A549 (cell line): ENCODE measurements at regions of chrX and their contacts with region 1.

Region 1: DNA sequence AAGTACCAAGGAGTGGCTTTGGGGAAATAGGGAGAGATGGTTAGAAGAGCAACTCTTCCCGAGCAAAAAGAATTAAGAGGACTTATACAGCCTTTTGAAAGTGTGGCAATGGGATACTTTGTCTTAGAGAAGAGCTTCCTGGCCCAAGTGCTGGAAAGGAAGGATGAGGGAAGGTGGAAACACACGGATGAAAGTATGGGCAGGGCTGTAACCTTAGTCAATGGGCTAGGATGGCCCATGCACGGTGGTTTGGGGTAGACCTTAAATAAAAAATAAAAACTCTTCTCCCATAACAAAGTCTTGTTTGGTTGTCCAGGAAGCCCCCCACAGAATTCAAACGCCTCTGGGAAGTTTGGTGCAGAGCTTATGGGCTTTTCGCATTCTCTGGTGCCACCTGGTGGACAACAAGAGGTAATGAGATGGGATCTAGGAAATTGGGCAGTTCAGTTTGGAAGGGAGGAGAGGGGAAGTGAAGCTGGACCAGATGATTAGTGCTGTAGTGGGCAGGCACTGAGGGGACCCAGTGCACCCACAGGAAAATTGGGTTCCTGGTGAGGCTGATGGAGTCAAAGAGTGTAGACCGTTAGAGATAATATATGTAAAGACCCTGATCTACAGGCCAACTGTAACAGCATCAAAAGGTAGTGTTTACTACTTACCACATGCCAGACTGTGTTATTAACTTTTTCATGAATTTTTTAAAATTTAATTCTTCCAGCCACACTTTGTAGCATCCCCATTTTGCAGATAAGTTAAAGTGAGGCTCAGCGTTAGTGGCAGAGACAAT is 13.8 kb upstream of the ENOX2 start:
- DNase-seq: peak; percentile 44 to 55
- ATAC-seq: peak; percentile 85 to 87
- H3K4me3 ChIP-seq: no peak overlapping the region
- H3K27ac ChIP-seq: no peak overlapping the region
- H3K4me1 ChIP-seq: no peaks in the 10 kb centered on the region
- CTCF ChIP-seq: peak; percentile 78
- EP300 ChIP-seq: no peak
- POLR2A ChIP-seq: no peak
- RAD21 ChIP-seq: peak; percentile 90

Region 2: GRCh38 chrX:130330706-130331105 is 586.1 kb before region 1 on chrX:
- CTCF ChIA-PET with region 1: interaction called, 13 read pairs
- POLR2A ChIA-PET with region 1: no interaction called
- DNase-seq: peak; percentile 53 to 75
- ATAC-seq: peak; percentile 94
- H3K4me3 ChIP-seq: no peak overlapping the region
- H3K27ac ChIP-seq: no peak overlapping the region
- H3K4me1 ChIP-seq: no peaks in the 10 kb centered on the region
- CTCF ChIP-seq: peak; percentile 70
- EP300 ChIP-seq: no peak
- POLR2A ChIP-seq: no peak
- RAD21 ChIP-seq: peak; percentile 66 to 74

Region 3: GRCh38 chrX:130393451-130394074 is 523.3 kb before region 1 on chrX:
- CTCF ChIA-PET with region 1: interaction called, 58 read pairs
- POLR2A ChIA-PET with region 1: no interaction called
- DNase-seq: peak; percentile 60 to 71
- ATAC-seq: peak; percentile 94 to 95
- H3K4me3 ChIP-seq: no peak overlapping the region
- H3K27ac ChIP-seq: no peak overlapping the region
- H3K4me1 ChIP-seq: no peaks in the 10 kb centered on the region
- CTCF ChIP-seq: peak; percentile 69
- EP300 ChIP-seq: no peak
- POLR2A ChIP-seq: no peak
- RAD21 ChIP-seq: peak; percentile 65 to 71

Region 4: GRCh38 chrX:130539721-130540321 is 377.0 kb before region 1 on chrX:
- CTCF ChIA-PET with region 1: interaction called, 62 read pairs
- POLR2A ChIA-PET with region 1: no interaction called
- DNase-seq: peak; percentile 25 to 53
- ATAC-seq: peak; percentile 66 to 87; a peak in 4 of 6 replicates
- H3K4me3 ChIP-seq: no peak overlapping the region
- H3K27ac ChIP-seq: no peak overlapping the region
- H3K4me1 ChIP-seq: no peaks in the 10 kb centered on the region
- CTCF ChIP-seq: peak; percentile 79
- EP300 ChIP-seq: no peak
- POLR2A ChIP-seq: no peak
- RAD21 ChIP-seq: peak; percentile 61 to 63

Region 5: GRCh38 chrX:130552444-130553073 is 364.3 kb before region 1 on chrX:
- CTCF ChIA-PET with region 1: interaction called, 13 read pairs
- POLR2A ChIA-PET with region 1: no interaction called
- DNase-seq: no peak
- ATAC-seq: no peak
- H3K4me3 ChIP-seq: no peak overlapping the region
- H3K27ac ChIP-seq: no peak overlapping the region
- H3K4me1 ChIP-seq: 0 out of 3 replicates have a peak, but pooled peaks cover 3% of the 10 kb centered on the region
- CTCF ChIP-seq: no peak
- EP300 ChIP-seq: no peak
- POLR2A ChIP-seq: no peak
- RAD21 ChIP-seq: no peak

Region 6: GRCh38 chrX:130575831-130576389 is 340.9 kb before region 1 on chrX:
- CTCF ChIA-PET with region 1: interaction called, 28 read pairs
- POLR2A ChIA-PET with region 1: no interaction called
- DNase-seq: peak; percentile 32 to 51
- ATAC-seq: peak; percentile 64 to 84; a peak in 4 of 6 replicates
- H3K4me3 ChIP-seq: no peak overlapping the region
- H3K27ac ChIP-seq: no peak overlapping the region
- H3K4me1 ChIP-seq: no peaks in the 10 kb centered on the region
- CTCF ChIP-seq: peak; percentile 55
- EP300 ChIP-seq: no peak
- POLR2A ChIP-seq: no peak
- RAD21 ChIP-seq: peak; percentile 57 to 70

Region 7: GRCh38 chrX:130896026-130896425 is 20.8 kb before region 1 on chrX:
- CTCF ChIA-PET with region 1: interaction called, 10 read pairs
- POLR2A ChIA-PET with region 1: no interaction called
- DNase-seq: no peak
- ATAC-seq: no peak
- H3K4me3 ChIP-seq: no peak overlapping the region
- H3K27ac ChIP-seq: no peak overlapping the region
- H3K4me1 ChIP-seq: no peaks in the 10 kb centered on the region
- CTCF ChIP-seq: no peak
- EP300 ChIP-seq: no peak
- POLR2A ChIP-seq: no peak
- RAD21 ChIP-seq: no peak

Region 8: GRCh38 chrX:130937101-130937500 is 20.3 kb after region 1 on chrX:
- CTCF ChIA-PET with region 1: no interaction called
- POLR2A ChIA-PET with region 1: no interaction called
- DNase-seq: no peak
- ATAC-seq: no peak
- H3K4me3 ChIP-seq: no peak overlapping the region
- H3K27ac ChIP-seq: no peak overlapping the region
- H3K4me1 ChIP-seq: no peaks in the 10 kb centered on the region
- CTCF ChIP-seq: no peak
- EP300 ChIP-seq: no peak
- POLR2A ChIP-seq: no peak
- RAD21 ChIP-seq: no peak

Region 9: GRCh38 chrX:132004708-132005107 is 1087.9 kb after region 1 on chrX:
- CTCF ChIA-PET with region 1: no interaction called
- POLR2A ChIA-PET with region 1: no interaction called
- DNase-seq: no peak
- ATAC-seq: no peak
- H3K4me3 ChIP-seq: no peak overlapping the region
- H3K27ac ChIP-seq: no peak overlapping the region
- H3K4me1 ChIP-seq: no peaks in the 10 kb centered on the region
- CTCF ChIP-seq: no peak
- EP300 ChIP-seq: no peak
- POLR2A ChIP-seq: no peak
- RAD21 ChIP-seq: no peak